ENCODE measurements at regions of chr2 and their contacts with region 1.

Region 1: GRCh38 chr2:86249579-86250391 is 50.5 kb downstream of the MRPL35 start:
- DNase-seq: no peak
- ATAC-seq: peak in 7 of 8 donors; percentile 6 to 75 (median 42)
- H3K4me3 ChIP-seq: no peak overlapping the region
- H3K27ac ChIP-seq: peak overlapping the region in 6 of 10 donors; percentile 3 to 64 (median 44)
- H3K4me1 ChIP-seq: peaks cover 6 to 56% (median 20%) of the 10 kb centered on the region in 9 donors
- H3K27me3 ChIP-seq: peaks cover 0 to 5% (median 0%) of the 10 kb centered on the region in 7 donors
- CTCF ChIP-seq: no peak

Region 2: GRCh38 chr2:86225581-86225980 is 24.2 kb before region 1 on chr2:
- intact Hi-C with region 1: no loop called
- DNase-seq: peak; percentile 77 to 84
- ATAC-seq: peak; percentile 81 to 90 (median 88)
- H3K4me3 ChIP-seq: peak overlapping the region in 3 of 10 donors; percentile 3 to 25 (median 24)
- H3K27ac ChIP-seq: peak overlapping the region; percentile 77 to 94 (median 86)
- H3K4me1 ChIP-seq: peaks cover 17 to 62% (median 50%) of the 10 kb centered on the region in 9 donors
- H3K27me3 ChIP-seq: no peaks in the 10 kb centered on the region
- CTCF ChIP-seq: peak in 4 of 9 donors; percentile 10 to 36 (median 28)

Region 3: DNA sequence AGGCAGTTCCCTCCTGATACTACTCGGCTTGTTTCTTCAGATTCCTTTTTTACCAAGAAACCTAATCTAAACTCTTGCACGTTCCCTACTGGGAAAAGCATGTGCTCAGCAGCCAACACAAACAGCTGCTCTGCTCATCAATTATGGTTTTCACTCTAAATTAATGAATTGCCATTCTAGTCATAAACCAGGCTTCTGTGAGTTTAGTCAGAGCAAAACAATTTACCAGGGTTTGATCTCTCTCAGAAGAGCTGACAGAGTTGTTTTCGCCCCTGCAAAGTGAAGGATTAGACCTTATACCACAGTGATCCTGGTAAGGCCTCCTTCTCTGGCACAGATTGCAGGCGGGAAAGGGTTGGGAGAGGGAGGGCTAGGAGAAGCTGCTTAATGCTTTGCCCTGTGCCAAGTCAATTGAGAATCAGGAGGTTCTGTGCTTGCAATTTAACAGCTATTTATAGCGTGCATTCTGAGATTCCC is 30.4 kb after region 1 on chr2:
- intact Hi-C with region 1: loop called in 1 of 10 experiments (anchors 5 kb)
- DNase-seq: peak in 1 of 2 donors; percentile 31
- ATAC-seq: peak; percentile 26 to 64 (median 42)
- H3K4me3 ChIP-seq: peak overlapping the region in 1 of 10 donors; percentile 2
- H3K27ac ChIP-seq: peak overlapping the region in 6 of 10 donors; percentile 9 to 55 (median 46)
- H3K4me1 ChIP-seq: peaks cover 6 to 62% (median 36%) of the 10 kb centered on the region in 9 donors
- H3K27me3 ChIP-seq: no peaks in the 10 kb centered on the region
- CTCF ChIP-seq: no peak

Region 4: GRCh38 chr2:86290596-86291327 is 41.0 kb after region 1 on chr2:
- intact Hi-C with region 1: no loop called
- DNase-seq: peak; percentile 25 to 47
- ATAC-seq: peak; percentile 54 to 86 (median 76)
- H3K4me3 ChIP-seq: no peak overlapping the region
- H3K27ac ChIP-seq: peak overlapping the region in 8 of 10 donors; percentile 12 to 68 (median 62)
- H3K4me1 ChIP-seq: peaks cover 0 to 59% (median 32%) of the 10 kb centered on the region in 9 donors
- H3K27me3 ChIP-seq: no peaks in the 10 kb centered on the region
- CTCF ChIP-seq: no peak

Region 5: DNA sequence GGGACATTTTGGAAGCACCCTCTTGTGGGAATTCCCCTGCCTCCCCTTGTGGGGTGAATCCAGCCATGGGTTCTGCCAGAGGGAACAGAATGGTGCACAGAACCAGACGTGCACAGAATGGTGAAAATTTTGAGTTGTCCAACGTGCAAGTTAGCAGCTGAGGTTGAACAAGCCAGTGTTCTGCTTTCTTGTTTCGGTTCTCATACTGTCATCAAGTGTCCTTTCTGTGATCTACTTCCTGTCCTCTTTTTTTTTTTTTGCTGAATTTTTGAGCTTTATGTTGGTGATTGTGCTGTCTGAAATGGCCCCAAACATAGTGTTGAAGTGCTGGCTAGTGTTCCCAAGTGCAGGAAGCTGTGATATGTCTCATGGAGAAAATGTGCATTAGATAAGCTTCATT is 109.2 kb after region 1 on chr2:
- intact Hi-C with region 1: no loop called
- DNase-seq: no peak
- ATAC-seq: peak in 1 of 8 donors; percentile 14
- H3K4me3 ChIP-seq: no peak overlapping the region
- H3K27ac ChIP-seq: no peak overlapping the region
- H3K4me1 ChIP-seq: no peaks in the 10 kb centered on the region
- H3K27me3 ChIP-seq: no peaks in the 10 kb centered on the region
- CTCF ChIP-seq: no peak